Aorta (tissue), 5 donors: ENCODE measurements at regions of chr10 and their contacts with region 1.

Region 1: DNA sequence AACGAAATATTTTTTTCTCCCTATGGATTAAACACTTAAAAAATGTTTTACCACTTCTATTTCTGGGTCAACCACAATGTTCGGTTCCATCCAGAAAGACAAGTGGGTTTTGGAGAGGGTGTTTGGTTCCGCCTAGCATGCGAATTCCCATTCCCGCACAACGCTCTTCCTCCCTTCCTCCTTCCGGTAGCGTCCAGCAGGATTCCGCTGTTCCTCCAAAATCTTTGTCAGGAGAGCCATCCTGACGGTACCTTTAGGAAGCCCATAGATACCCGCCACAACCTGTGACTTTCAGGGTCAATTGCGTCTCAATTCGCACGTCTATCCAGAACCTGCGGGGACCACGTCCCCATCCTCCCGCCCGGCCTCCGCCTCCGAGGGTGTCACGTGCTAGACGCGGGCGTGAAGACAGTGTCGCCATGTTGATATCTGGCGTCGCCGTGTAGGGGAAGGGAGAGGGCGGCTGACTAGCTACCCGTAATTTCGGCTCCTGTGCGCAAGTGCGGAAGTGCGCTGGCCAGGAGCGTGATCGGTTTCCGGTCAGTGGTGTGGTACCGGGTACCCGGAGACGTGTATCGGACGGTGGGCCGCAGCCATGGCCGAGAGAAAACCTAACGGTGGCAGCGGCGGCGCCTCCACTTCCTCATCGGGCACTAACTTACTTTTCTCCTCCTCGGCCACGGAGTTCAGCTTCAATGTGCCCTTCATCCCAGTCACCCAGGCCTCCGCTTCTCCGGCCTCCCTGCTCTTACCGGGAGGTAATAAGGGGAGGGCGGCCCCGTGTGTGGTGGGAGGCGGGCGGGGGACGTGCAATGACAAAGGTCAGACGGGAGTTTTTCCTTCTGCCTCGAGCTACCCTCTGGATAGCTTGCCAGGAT is at the start of gene SEC23IP:
- DNase-seq: peak; percentile 99
- ATAC-seq: peak; percentile 100
- H3K4me3 ChIP-seq: peak within 1 kb of the TSS; percentile 58 to 82
- H3K27ac ChIP-seq: peak within 1 kb of the TSS in 1 of 2 donors; percentile 60
- H3K4me1 ChIP-seq: peaks cover 0 to 1% of the 10 kb centered on the region in 2 donors
- H3K27me3 ChIP-seq: no peaks in the 10 kb centered on the region
- total RNA-seq, gene SEC23IP: 48.4 to 52.0 TPM

Region 2: GRCh38 chr10:119872860-119873681 is 19.4 kb before region 1 on chr10:
- intact Hi-C with region 1: loop called in 1 of 2 experiments (anchors 1 kb)
- DNase-seq: peak; percentile 94 to 96
- ATAC-seq: peak; percentile 99
- H3K4me3 ChIP-seq: peak overlapping the region; percentile 95 to 97
- H3K27ac ChIP-seq: peak overlapping the region; percentile 61 to 83
- H3K4me1 ChIP-seq: peaks cover 0 to 4% of the 10 kb centered on the region in 2 donors
- H3K27me3 ChIP-seq: peaks cover 0 to 1% of the 10 kb centered on the region in 2 donors